HepG2 (cell line): ENCODE measurements at regions of chr10 and their contacts with region 1.

Region 1: GRCh38 chr10:88896994-88897853 is 17.2 kb downstream of the STAMBPL1 start:
- DNase-seq: peak; percentile 44
- ATAC-seq: peak; percentile 68
- H3K4me3 ChIP-seq: peak overlapping the region in 1 of 3 experiments; percentile 17; a peak in 1 of 6 replicates
- H3K27ac ChIP-seq: peak overlapping the region; percentile 24
- H3K4me1 ChIP-seq: peaks cover 34% of the 10 kb centered on the region
- H3K27me3 ChIP-seq: no peaks in the 10 kb centered on the region
- CTCF ChIP-seq: no peak
- EP300 ChIP-seq: no peak
- POLR2A ChIP-seq: no peak
- RAD21 ChIP-seq: no peak

Region 2: GRCh38 chr10:88791924-88792323 is 105.3 kb before region 1 on chr10:
- CTCF ChIA-PET with region 1: no interaction called
- POLR2A ChIA-PET with region 1: no interaction called
- in situ Hi-C with region 1: no loop called
- intact Hi-C with region 1: loop called (anchors 1 kb)
- DNase-seq: peak; percentile 8
- ATAC-seq: peak; percentile 79
- H3K4me3 ChIP-seq: no peak overlapping the region
- H3K27ac ChIP-seq: no peak overlapping the region
- H3K4me1 ChIP-seq: no peaks in the 10 kb centered on the region
- H3K27me3 ChIP-seq: no peaks in the 10 kb centered on the region
- CTCF ChIP-seq: peak; percentile 45
- EP300 ChIP-seq: no peak
- POLR2A ChIP-seq: no peak
- RAD21 ChIP-seq: no peak

Region 3: GRCh38 chr10:88952647-88953111 is 55.5 kb after region 1 on chr10 and contains the start of gene ACTA2:
- CTCF ChIA-PET with region 1: no interaction called
- POLR2A ChIA-PET with region 1: no interaction called
- in situ Hi-C with region 1: no loop called
- intact Hi-C with region 1: no loop called
- DNase-seq: no peak
- ATAC-seq: no peak
- H3K4me3 ChIP-seq: no peak within 1 kb of the TSS
- H3K27ac ChIP-seq: no peak within 1 kb of the TSS
- H3K4me1 ChIP-seq: peaks cover 13% of the 10 kb centered on the region
- H3K27me3 ChIP-seq: no peaks in the 10 kb centered on the region
- CTCF ChIP-seq: no peak
- EP300 ChIP-seq: no peak
- POLR2A ChIP-seq: no peak
- RAD21 ChIP-seq: no peak
- total RNA-seq, gene ACTA2: 58.1 and 59.9 TPM in 2 replicates